RWPE1 (cell line): ENCODE measurements at regions of chr17 and their contacts with region 1.

Region 1: GRCh38 chr17:41548844-41549595 is 20.9 kb upstream of the KRT19 start:
- DNase-seq: peak; percentile 79
- H3K27ac ChIP-seq: peak overlapping the region; percentile 98
- CTCF ChIP-seq: peak; percentile 94

Region 2: DNA sequence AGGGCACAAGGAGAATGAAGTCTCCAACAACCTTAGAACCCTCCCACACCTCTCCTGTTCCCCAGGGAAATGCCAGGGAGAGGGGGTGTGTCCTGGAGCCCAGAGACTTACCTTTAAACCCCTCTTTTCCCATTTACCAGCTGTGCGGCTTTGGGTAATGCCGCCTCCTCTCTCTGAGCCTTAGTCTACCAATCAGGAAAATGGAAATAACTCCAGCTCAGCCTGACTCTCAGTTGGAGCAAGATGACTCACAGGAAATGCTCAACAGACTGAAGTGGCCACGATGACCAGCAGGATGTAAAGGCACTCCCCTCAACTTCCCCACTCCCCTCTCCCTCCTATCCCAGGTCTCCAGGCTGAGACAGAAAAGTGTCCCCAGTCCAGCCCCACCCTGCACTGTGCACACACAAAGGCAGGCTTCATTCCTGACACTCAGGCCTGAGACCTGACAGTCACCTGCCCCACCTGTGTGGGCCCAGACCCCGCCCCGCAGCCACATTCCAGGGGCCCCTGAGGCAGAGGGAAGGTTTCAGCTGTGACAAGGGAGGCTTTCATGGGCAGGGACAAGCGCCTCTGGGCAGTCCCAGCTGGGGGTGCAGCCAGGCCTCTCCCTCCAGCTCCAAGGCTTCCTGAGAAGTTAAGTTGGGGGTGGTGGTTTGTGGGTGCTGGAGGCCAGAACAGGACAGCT is 27.3 kb before region 1 on chr17:
- CTCF ChIA-PET with region 1: interaction called, 36 read pairs
- POLR2A ChIA-PET with region 1: interaction called, 4 read pairs
- DNase-seq: peak; percentile 77
- H3K27ac ChIP-seq: peak overlapping the region; percentile 98
- CTCF ChIP-seq: no peak

Region 3: DNA sequence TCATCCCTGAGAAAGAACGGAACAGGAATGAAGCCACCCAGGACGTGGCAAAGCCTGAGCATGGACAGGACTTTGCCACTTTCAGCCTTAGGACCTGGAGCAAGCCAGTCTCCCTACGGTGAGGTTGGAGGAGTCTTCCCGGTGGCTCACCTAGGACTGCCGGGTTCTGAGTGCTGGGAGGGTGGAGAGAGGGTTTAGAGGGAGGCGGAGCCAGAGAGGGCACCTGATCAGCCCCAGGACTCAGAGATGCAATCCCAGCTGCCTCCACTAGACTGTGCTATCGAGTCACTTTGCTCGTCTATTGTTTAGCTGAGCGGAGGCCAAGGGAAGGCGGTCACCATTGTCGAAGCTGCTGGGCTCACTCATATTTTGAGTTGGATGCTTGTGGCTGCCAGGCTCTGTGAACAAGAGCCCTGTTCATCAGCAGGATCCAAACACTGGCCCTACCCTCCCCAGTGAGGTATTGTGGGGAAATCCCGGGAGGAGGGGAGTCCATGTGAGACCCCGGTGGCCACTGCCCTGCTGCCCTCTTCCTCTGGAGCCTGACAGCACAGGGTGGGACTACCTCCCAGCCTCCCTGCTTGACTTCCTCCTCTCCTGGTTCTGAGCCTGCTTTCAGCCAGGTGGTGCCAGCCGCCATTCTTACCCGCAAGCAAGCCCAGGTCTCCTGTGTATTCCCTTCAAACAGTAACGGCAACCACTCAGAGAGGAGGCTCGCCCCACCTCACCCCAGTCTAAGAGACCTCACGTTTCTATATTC is 30.6 kb after region 1 on chr17:
- CTCF ChIA-PET with region 1: interaction called, 16 read pairs
- POLR2A ChIA-PET with region 1: interaction called, 4 read pairs
- DNase-seq: peak; percentile 89
- H3K27ac ChIP-seq: peak overlapping the region; percentile 100
- CTCF ChIP-seq: peak; percentile 96

Region 4: DNA sequence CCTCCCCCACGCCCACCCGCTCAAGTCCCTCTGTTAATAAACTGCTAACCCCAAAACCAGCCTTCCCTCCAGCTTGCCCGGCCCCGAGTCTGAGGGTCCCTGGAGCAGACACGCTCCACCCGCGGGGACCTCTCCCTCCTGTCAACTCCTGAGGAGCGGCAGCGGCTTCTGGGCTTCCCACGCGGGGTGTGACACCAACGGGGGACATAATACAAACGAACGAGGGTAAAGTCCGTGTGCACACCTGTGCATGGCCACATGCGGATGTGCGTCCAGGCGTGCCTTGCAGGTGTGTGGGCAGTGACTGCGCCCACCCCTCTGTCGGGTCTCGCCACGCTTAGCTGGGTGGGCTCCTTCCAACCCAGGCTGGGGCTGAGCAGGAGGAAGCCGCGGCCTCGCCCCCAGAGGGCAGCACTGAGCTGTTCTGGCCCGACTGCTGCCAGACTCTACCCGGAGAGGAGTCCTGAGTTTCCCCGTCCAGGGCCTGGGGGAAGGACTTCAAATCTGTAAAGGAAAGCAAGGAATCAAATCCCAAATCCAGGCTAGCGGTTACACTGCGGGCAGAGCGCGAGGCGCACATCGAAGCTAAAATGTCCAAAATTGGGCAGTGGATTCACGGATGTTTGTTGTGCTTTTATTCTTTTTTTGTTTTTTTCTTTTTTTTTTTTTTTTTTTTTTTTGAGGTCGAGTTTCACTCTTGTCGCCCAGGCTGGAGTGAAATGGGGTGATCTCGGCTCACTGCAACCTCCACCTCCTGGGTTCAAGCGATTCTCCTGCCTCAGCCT is 99.6 kb after region 1 on chr17:
- CTCF ChIA-PET with region 1: interaction called, 51 read pairs
- POLR2A ChIA-PET with region 1: no interaction called
- DNase-seq: peak; percentile 76
- H3K27ac ChIP-seq: peak overlapping the region; percentile 100
- CTCF ChIP-seq: peak; percentile 85

Region 5: DNA sequence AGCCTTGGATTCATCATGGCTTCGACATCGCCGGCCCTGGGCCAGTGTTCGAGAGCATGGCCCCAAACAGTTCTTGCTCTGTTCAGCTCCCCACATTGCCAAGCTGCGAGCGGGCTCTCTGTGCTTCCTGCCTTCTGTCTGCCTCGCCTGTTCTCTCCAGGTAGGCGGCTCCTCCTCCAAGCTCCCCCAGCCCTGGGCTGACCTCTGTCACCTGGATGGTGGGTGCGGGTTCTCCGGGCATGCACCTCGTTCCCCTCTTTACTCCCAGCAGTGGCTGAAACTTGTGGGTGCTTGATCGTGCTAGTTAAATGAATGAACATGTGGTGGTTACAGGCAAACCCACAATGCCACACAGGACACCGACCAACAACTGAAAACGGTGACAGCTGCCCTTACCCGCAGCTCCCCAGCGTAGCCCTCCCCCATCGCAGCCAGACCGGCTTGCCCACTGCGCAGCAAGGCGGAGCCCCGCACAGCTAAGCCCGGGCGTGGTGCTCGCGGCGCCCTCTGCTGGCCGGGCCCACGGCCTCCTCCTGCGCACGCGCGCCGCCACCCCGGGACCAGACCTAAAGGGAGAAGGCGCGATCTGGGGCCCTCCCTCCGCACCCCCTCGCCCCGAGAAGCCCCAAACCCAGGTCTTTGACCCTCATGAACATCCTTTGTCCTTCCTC is 116.7 kb after region 1 on chr17:
- CTCF ChIA-PET with region 1: interaction called, 57 read pairs
- POLR2A ChIA-PET with region 1: interaction called, 3 read pairs
- DNase-seq: peak; percentile 98
- H3K27ac ChIP-seq: peak overlapping the region; percentile 100
- CTCF ChIP-seq: peak; percentile 93